AG04450 (cell line): ENCODE measurements at regions of chr17 and their contacts with region 1.

Region 1: GRCh38 chr17:43483674-43484372 is at the start of gene DHX8:
- DNase-seq: peak; percentile 97
- H3K4me3 ChIP-seq: peak within 1 kb of the TSS; percentile 99
- H3K27ac ChIP-seq: peak within 1 kb of the TSS; percentile 87
- H3K27me3 ChIP-seq: no peaks in the 10 kb centered on the region
- CTCF ChIP-seq: peak; percentile 100
- polyA plus RNA-seq, gene DHX8: 46.0 and 47.3 TPM in 2 replicates

Region 2: GRCh38 chr17:43360739-43361505 is 122.9 kb before region 1 on chr17:
- CTCF ChIA-PET with region 1: interaction called, 7 read pairs
- POLR2A ChIA-PET with region 1: interaction called, 15 read pairs
- DNase-seq: peak; percentile 98
- H3K4me3 ChIP-seq: peak overlapping the region; percentile 58
- H3K27ac ChIP-seq: peak overlapping the region; percentile 87
- H3K27me3 ChIP-seq: no peaks in the 10 kb centered on the region
- CTCF ChIP-seq: no peak

Region 3: DNA sequence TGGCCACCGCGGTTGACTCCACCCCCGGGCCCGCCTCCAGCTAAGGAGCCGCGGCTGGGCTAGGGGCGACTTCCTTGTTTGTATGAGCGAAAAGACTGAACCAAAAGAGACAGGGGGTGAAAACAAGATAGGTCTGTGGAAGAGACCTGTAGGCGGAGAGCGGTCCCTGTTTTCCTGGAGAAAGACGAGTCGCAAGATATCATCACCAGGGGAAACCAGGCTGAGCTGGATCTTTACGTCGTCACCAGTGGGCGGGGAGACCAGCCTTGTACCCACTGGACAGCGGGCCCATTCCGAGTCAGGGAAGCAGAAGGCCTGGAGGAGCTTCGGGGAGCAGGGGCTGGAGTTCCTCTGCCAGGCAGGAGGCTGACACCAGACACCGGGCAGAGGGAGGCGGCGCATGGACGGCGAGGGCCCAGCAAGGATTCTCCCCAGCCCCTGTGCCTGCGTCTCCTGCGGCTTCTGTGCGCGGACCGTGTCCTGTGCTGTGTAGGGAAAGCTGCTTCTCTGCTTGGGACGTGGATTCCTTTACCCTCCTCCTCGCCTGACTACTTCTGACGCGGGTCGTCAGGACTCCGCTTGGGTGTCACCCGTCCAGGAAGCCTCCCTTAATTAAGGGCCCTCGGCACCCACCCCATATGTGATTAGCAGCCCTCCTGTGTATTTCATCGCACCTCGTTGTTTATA is 95.3 kb before region 1 on chr17:
- CTCF ChIA-PET with region 1: interaction called, 395 read pairs
- POLR2A ChIA-PET with region 1: interaction called, 39 read pairs
- DNase-seq: peak; percentile 79
- H3K4me3 ChIP-seq: peak overlapping the region; percentile 69
- H3K27ac ChIP-seq: peak overlapping the region; percentile 96
- H3K27me3 ChIP-seq: no peaks in the 10 kb centered on the region
- CTCF ChIP-seq: no peak

Region 4: GRCh38 chr17:43400943-43401692 is 82.7 kb before region 1 on chr17:
- CTCF ChIA-PET with region 1: interaction called, 395 read pairs
- POLR2A ChIA-PET with region 1: interaction called, 39 read pairs
- DNase-seq: peak; percentile 43
- H3K4me3 ChIP-seq: peak overlapping the region; percentile 74
- H3K27ac ChIP-seq: peak overlapping the region; percentile 52
- H3K27me3 ChIP-seq: no peaks in the 10 kb centered on the region
- CTCF ChIP-seq: no peak

Region 5: DNA sequence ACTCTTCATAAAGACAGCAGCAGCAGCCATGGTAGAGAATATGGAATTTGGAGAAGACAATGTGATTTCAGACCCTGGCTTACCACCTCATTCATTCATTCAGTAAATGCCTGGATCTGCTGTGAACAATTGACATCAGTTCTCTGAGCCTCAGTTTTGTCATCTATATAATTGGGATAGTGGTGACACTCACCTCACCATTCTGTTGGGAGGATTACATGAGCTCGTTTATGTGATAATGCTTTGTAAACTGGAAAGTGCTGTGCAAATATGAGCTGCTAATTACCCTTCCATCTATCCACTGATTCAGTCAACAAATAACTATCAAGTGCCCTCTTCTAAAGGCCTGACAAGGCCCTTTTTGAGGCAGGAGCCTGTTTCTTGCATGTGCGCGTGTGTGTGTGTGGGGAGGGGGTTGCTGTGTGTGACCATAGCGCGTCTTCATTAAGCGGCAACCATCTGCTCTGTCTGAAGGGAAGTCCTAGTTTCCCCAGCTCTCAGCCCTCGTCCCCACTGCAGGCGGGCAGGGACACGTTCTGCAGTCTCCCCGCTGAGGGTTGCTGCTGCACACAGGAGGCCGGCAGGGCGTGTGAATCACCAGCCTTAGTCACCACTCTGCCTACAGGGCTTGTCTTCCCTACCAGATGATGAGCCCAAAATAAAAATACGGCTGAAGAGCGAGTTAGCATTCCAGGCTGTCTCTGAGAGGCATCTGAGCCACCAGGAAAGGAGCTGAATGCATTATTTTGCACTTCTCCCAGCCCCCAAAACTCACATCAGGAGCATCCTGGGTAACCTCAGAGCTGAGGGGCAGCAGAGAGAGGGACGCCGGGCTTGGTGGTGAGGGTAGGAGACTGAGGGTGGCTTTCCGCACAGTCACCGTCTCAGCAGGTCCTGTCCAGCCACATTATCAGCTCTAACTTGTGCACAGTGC is 65.1 kb before region 1 on chr17:
- CTCF ChIA-PET with region 1: interaction called, 29 read pairs
- POLR2A ChIA-PET with region 1: no interaction called
- DNase-seq: peak; percentile 59
- H3K4me3 ChIP-seq: no peak overlapping the region
- H3K27ac ChIP-seq: peak overlapping the region; percentile 68
- H3K27me3 ChIP-seq: peaks cover 2% of the 10 kb centered on the region
- CTCF ChIP-seq: 0 out of 2 replicates have a peak, but pooled peaks have one; percentile 5

Region 6: DNA sequence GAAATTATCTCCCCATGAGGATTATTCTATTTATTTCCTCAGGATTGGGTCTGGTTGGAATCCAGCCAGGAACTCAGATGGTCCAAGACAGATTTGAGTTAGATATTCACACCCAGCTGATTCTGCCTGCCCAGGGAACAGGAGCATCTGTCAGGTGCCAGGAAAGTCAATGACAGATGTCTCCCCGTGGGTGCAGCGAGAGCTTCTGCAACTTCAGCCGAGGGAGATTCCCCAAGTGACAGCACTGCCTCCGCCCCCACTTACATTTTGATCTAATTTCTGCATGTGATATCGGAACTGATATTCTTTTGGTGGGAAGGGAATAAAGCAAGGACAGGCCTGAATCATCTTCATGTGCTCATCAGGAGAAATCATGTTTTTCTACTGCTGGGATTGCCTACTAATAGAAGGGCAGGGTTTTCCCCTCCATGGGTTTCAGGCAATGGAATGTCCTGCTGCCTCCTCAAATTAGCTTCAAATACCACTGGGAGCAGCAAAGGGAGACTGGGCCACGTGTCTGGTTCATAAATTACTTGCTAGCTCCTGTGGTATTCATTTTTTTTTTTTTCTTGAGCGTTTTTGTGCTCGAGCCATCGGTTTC is 15.7 kb before region 1 on chr17:
- CTCF ChIA-PET with region 1: interaction called, 26 read pairs
- POLR2A ChIA-PET with region 1: interaction called, 3 read pairs
- DNase-seq: no peak
- H3K4me3 ChIP-seq: no peak overlapping the region
- H3K27ac ChIP-seq: no peak overlapping the region
- H3K27me3 ChIP-seq: no peaks in the 10 kb centered on the region
- CTCF ChIP-seq: no peak